Panc1 (cell line): ENCODE measurements at regions of chr18 and their contacts with region 1.

Region 1: DNA sequence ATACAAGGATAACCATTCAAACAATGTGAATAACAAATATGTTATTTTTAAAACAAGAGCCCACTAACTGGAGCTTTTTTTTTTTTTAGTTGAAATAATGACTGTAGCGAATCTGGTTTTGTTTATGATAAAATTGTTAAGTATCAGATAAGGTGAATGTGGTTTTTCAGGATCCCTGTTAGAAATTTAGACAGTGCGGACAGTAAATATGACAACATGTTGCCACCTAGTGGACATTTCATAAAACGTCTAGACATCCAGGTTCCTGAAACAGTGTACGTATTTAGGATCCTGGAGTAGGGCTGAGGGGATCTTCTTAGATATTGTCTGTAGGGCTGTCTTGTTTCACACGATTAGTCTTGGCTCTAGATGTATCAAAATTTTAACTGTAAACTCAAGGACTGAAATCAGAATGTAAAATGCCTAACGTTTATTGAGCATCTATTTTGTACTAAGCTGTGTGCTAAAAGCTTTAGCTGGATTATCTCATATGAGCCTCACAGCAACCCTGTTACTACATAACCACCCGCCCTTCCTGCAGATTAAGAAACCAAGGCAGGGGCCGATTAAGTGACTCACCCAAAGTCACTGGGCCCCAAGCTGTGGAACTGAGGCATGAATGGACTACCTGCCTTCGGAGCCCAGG is 23.9 kb upstream of the CCDC68 start:
- DNase-seq: peak; percentile 35
- ATAC-seq: peak; percentile 87
- H3K4me3 ChIP-seq: no peak overlapping the region
- H3K27ac ChIP-seq: no peak overlapping the region
- H3K4me1 ChIP-seq: no peaks in the 10 kb centered on the region
- H3K27me3 ChIP-seq: no peaks in the 10 kb centered on the region
- CTCF ChIP-seq: peak; percentile 31; the same call in 1 of the 2 replicates

Region 2: GRCh38 chr18:54679318-54680149 is 303.6 kb before region 1 on chr18:
- CTCF ChIA-PET with region 1: interaction called, 4 read pairs
- POLR2A ChIA-PET with region 1: no interaction called
- in situ Hi-C with region 1: no loop called
- intact Hi-C with region 1: loop called (anchors 1 kb)
- DNase-seq: peak; percentile 73
- ATAC-seq: peak; percentile 85
- H3K4me3 ChIP-seq: no peak overlapping the region
- H3K27ac ChIP-seq: no peak overlapping the region
- H3K4me1 ChIP-seq: no peaks in the 10 kb centered on the region
- H3K27me3 ChIP-seq: no peaks in the 10 kb centered on the region
- CTCF ChIP-seq: peak; percentile 36; the same call in 1 of the 2 replicates